ENCODE measurements at regions of chr15 and their contacts with region 1.

Region 1: GRCh38 chr15:33700695-33701304 is 267.5 kb upstream of the CHRM5 start:
- DNase-seq: peak; percentile 85
- H3K4me3 ChIP-seq: no peak overlapping the region
- H3K27ac ChIP-seq: no peak overlapping the region
- H3K4me1 ChIP-seq: no peaks in the 10 kb centered on the region
- H3K27me3 ChIP-seq: peaks cover 0 to 3% of the 10 kb centered on the region in 2 experiments
- CTCF ChIP-seq: peak; percentile 96 to 97
- POLR2A ChIP-seq: no peak

Region 2: GRCh38 chr15:33021806-33022389 is 678.9 kb before region 1 on chr15:
- CTCF ChIA-PET with region 1: interaction called, 5 read pairs
- POLR2A ChIA-PET with region 1: no interaction called
- dilution Hi-C with region 1: no loop called
- intact Hi-C with region 1: loop called (anchors 5 kb)
- DNase-seq: peak; percentile 71
- H3K4me3 ChIP-seq: no peak overlapping the region
- H3K27ac ChIP-seq: peak overlapping the region; percentile 60
- H3K4me1 ChIP-seq: peaks cover 10% of the 10 kb centered on the region
- H3K27me3 ChIP-seq: no peaks in the 10 kb centered on the region
- CTCF ChIP-seq: peak; percentile 45 to 51
- POLR2A ChIP-seq: no peak

Region 3: DNA sequence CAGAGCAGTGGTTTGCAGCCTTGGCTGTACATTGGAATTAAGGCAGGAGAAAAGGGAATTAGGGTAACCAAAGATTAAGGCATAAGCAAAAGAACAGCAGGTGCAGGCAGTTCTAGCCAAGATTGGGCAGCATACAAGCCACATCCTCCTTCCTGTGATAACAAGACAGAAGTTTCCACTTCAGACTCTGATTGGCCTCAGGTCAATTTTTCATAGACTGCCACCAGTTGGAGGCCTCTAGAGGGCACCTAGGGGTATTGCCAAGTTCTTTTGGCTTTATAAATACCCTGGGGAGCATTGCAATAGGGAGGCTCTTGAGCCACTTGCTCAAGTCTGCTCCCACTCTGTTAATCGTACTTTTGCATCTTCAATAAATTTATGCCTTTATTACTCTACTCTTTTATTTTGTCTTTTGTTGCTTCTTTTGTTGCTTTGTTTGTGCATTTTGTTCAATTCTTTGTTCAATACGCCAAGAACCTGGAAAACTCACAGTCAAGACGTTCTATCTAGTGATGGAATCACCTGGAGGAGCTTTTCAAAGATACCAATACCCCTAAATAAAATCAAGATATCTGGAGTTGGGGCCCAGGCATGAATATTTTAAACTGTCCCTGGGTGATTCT is 474.1 kb before region 1 on chr15:
- CTCF ChIA-PET with region 1: interaction called, 18 read pairs
- POLR2A ChIA-PET with region 1: no interaction called
- dilution Hi-C with region 1: no loop called
- intact Hi-C with region 1: no loop called
- DNase-seq: peak; percentile 58
- H3K4me3 ChIP-seq: no peak overlapping the region
- H3K27ac ChIP-seq: no peak overlapping the region
- H3K4me1 ChIP-seq: no peaks in the 10 kb centered on the region
- H3K27me3 ChIP-seq: no peaks in the 10 kb centered on the region
- CTCF ChIP-seq: peak; percentile 9 to 47
- POLR2A ChIP-seq: no peak

Region 4: GRCh38 chr15:33278816-33279612 is 421.8 kb before region 1 on chr15:
- CTCF ChIA-PET with region 1: interaction called, 10 read pairs
- POLR2A ChIA-PET with region 1: no interaction called
- dilution Hi-C with region 1: no loop called
- intact Hi-C with region 1: no loop called
- DNase-seq: peak; percentile 76
- H3K4me3 ChIP-seq: no peak overlapping the region
- H3K27ac ChIP-seq: no peak overlapping the region
- H3K4me1 ChIP-seq: peaks cover 7% of the 10 kb centered on the region
- H3K27me3 ChIP-seq: no peaks in the 10 kb centered on the region
- CTCF ChIP-seq: peak in 1 of 2 donors; percentile 20
- POLR2A ChIP-seq: no peak

Region 5: DNA sequence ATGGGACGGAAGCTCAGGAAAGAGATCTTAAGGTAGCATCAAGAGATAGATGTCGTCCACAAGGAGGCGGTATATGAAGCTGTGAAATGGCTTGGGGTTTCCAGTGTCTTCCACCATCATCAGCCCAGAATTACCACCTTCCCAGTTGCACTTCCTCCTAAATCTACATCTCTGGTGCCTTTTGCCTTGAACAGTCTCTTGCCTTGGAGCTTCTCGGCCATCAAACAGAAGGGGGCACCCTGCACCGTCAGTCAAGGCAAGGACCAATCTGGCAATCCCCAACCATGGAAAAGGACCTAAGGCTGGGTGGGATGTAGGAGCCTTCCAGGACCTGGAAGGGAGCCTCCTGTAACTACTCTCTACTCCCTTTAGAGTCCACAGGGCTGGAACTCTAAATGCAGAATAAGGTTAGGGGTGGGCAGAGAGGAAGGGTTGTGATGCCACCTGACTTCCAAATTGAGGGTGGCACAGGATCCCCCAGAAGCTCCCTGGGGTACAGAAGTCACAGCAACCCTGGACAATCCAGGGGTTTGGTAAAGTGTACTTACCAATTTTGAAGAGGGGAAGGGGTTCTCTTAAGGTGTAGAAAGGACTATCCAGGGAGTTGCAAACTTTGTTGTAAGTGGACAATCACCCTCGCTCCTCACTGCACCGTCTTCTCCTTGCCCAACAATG is 391.1 kb before region 1 on chr15:
- CTCF ChIA-PET with region 1: interaction called, 24 read pairs
- POLR2A ChIA-PET with region 1: no interaction called
- dilution Hi-C with region 1: no loop called
- intact Hi-C with region 1: no loop called
- DNase-seq: no peak
- H3K4me3 ChIP-seq: no peak overlapping the region
- H3K27ac ChIP-seq: no peak overlapping the region
- H3K4me1 ChIP-seq: no peaks in the 10 kb centered on the region
- H3K27me3 ChIP-seq: peaks cover 28 to 38% of the 10 kb centered on the region in 2 experiments
- CTCF ChIP-seq: no peak
- POLR2A ChIP-seq: no peak

Region 6: GRCh38 chr15:33722005-33722672 is 21.3 kb after region 1 on chr15:
- CTCF ChIA-PET with region 1: interaction called, 116 read pairs
- POLR2A ChIA-PET with region 1: no interaction called
- dilution Hi-C with region 1: no loop called
- intact Hi-C with region 1: loop called (anchors 2 kb)
- DNase-seq: peak; percentile 78
- H3K4me3 ChIP-seq: no peak overlapping the region
- H3K27ac ChIP-seq: peak overlapping the region; percentile 96
- H3K4me1 ChIP-seq: peaks cover 51% of the 10 kb centered on the region
- H3K27me3 ChIP-seq: no peaks in the 10 kb centered on the region
- CTCF ChIP-seq: no peak
- POLR2A ChIP-seq: no peak